HCT116 (cell line): ENCODE measurements at regions of chr20 and their contacts with region 1.

Region 1: DNA sequence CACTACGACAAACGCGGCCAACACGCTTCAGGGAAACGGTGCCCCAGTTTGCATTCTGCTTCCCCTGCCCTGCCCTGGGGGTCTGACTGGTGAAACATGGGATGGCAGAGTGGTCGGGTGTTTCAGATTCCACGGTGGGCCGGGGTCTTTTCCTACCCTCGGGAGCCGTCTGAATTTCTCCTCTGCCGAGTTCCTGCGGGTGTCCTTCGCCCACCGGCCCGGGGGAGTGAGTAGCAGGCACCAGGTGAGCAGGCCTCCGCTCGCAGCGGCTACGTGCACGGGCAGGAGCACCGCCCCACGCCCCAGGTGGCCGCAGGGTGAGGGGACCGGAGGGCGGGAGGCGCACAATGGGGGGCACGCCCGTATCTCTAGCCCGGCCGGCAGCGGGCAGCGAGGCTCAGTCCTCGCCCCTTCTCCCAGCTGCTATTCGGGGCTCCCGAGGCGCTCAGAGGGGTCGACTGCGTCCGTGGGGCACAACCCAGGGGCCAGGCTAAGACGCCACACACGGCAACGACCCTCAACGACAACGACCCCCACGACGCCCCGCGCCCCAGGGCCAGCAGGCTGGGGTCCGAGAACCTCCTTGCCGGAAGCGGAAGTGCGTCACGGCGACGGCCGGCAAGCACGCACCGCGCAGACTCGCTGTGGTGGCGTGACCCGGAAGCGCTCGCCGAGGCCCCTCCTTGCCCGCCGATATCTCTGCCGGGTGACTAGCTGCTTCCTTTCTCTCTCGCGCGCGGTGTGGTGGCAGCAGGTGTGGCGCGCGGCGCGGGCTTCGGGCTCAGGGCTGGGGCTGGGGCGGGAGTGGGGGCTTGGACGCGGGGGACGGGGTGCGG is at the start of gene RPS21:
- DNase-seq: peak; percentile 79
- ATAC-seq: peak; percentile 74
- H3K4me3 ChIP-seq: peak within 1 kb of the TSS; percentile 98 to 100
- H3K27ac ChIP-seq: peak within 1 kb of the TSS; percentile 95
- H3K4me1 ChIP-seq: peaks cover 8 to 37% of the 10 kb centered on the region in 2 experiments; a peak in 3 of 4 replicates
- H3K27me3 ChIP-seq: no peaks in the 10 kb centered on the region
- CTCF ChIP-seq: no peak
- POLR2A ChIP-seq: peak; percentile 80
- RAD21 ChIP-seq: no peak
- total RNA-seq, gene RPS21: 2,488 TPM

Region 2: DNA sequence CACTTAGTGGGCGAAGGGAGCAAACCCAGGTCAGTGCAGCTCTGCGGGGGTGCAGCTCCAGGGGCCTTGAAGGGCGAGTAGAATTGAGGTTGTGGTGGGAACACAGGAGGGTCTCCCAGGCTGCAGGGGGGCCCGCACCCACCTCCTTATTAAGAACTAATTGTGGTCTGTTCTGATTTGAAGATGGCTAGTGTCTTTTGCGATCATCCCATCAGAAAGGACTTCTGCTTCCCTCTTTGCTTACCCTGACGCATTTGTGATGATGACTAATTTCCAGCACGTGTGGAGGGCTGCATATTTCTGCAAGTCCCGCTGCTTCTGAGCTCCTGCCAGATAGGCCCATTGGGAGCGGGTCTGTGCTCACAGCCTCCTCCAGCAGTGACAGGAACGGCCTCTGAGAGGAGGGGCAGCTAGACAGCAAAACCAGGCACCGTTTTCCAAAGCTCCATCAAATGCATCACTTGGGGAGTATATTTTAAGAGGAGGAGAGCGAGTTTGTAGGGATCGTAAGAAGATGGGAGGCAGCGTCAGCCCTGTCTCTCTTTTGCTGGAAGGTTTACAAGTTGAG is 865.6 kb before region 1 on chr20:
- CTCF ChIA-PET with region 1: no interaction called
- POLR2A ChIA-PET with region 1: no interaction called
- RAD21 ChIA-PET with region 1: no interaction called
- intact Hi-C with region 1: no loop called
- DNase-seq: no peak
- ATAC-seq: no peak
- H3K4me3 ChIP-seq: no peak overlapping the region
- H3K27ac ChIP-seq: no peak overlapping the region
- H3K4me1 ChIP-seq: no peaks in the 10 kb centered on the region
- H3K27me3 ChIP-seq: no peaks in the 10 kb centered on the region
- CTCF ChIP-seq: no peak
- POLR2A ChIP-seq: no peak
- RAD21 ChIP-seq: no peak

Region 3: DNA sequence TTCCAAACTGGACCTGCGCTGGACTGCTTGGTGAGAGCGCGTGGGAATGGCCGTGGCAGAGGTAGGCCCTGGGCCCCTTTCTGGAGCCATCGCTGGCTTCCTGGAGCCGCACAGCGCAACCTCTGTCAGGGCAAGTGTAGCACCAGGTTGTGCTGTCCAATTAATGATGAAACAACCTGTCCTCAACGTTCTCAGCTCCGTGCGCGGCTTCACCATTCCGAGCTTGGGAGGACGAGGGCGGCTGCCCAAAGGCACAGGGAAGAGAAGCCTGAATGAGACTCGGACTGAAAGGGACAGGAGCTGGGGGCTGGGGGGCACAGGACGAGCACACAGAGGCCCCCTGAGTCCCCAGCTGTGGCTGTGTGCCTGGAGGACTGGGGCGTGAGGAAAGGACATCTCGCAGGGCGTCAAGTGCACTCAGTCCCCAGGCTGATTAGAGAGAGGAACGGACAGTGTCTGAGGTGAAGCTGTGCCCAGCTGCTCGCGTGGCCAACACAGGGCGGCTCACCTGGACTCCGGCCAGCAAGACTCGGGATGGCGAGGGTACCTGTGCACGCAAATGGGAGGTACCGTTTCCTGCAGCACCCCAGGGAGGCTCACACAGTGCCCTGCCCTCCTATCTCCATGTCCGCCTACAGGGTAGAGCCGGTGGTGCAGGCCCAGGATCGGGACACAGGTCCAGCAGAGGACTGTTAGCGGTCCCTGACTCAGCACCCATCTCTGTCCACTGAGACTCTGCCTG is 724.2 kb before region 1 on chr20:
- CTCF ChIA-PET with region 1: no interaction called
- POLR2A ChIA-PET with region 1: no interaction called
- RAD21 ChIA-PET with region 1: no interaction called
- intact Hi-C with region 1: no loop called
- DNase-seq: no peak
- ATAC-seq: peak; percentile 87
- H3K4me3 ChIP-seq: no peak overlapping the region
- H3K27ac ChIP-seq: no peak overlapping the region
- H3K4me1 ChIP-seq: no peaks in the 10 kb centered on the region
- H3K27me3 ChIP-seq: peaks cover 15% of the 10 kb centered on the region; the same call in 1 of the 2 replicates
- CTCF ChIP-seq: peak in 2 of 3 experiments; percentile 38 to 39; a peak in 3 of 6 replicates
- POLR2A ChIP-seq: no peak
- RAD21 ChIP-seq: no peak

Region 4: GRCh38 chr20:62010551-62011402 is 375.8 kb before region 1 on chr20:
- CTCF ChIA-PET with region 1: interaction called, 4 read pairs
- POLR2A ChIA-PET with region 1: no interaction called
- RAD21 ChIA-PET with region 1: no interaction called
- intact Hi-C with region 1: loop called (anchors 5 kb)
- DNase-seq: peak; percentile 10
- ATAC-seq: peak; percentile 82
- H3K4me3 ChIP-seq: no peak overlapping the region
- H3K27ac ChIP-seq: no peak overlapping the region
- H3K4me1 ChIP-seq: no peaks in the 10 kb centered on the region
- H3K27me3 ChIP-seq: no peaks in the 10 kb centered on the region
- CTCF ChIP-seq: peak; percentile 57 to 81 (median 74); a peak in 5 of 6 replicates
- POLR2A ChIP-seq: no peak
- RAD21 ChIP-seq: peak; percentile 88

Region 5: GRCh38 chr20:62302341-62303058 is 84.1 kb before region 1 on chr20 and contains the start of gene ADRM1:
- CTCF ChIA-PET with region 1: interaction called, 25 read pairs
- POLR2A ChIA-PET with region 1: interaction called, 4 read pairs
- RAD21 ChIA-PET with region 1: interaction called in 1 of 2 experiments, 8 read pairs
- intact Hi-C with region 1: loop called (anchors 1 kb)
- DNase-seq: peak; percentile 88
- ATAC-seq: peak; percentile 78
- H3K4me3 ChIP-seq: peak within 1 kb of the TSS; percentile 95 to 99
- H3K27ac ChIP-seq: peak within 1 kb of the TSS; percentile 95
- H3K4me1 ChIP-seq: peaks cover 17 to 40% of the 10 kb centered on the region in 2 experiments
- H3K27me3 ChIP-seq: no peaks in the 10 kb centered on the region
- CTCF ChIP-seq: peak; percentile 77 to 95 (median 93)
- POLR2A ChIP-seq: peak; percentile 23
- RAD21 ChIP-seq: peak; percentile 66
- total RNA-seq, gene ADRM1: 158 TPM

Region 6: DNA sequence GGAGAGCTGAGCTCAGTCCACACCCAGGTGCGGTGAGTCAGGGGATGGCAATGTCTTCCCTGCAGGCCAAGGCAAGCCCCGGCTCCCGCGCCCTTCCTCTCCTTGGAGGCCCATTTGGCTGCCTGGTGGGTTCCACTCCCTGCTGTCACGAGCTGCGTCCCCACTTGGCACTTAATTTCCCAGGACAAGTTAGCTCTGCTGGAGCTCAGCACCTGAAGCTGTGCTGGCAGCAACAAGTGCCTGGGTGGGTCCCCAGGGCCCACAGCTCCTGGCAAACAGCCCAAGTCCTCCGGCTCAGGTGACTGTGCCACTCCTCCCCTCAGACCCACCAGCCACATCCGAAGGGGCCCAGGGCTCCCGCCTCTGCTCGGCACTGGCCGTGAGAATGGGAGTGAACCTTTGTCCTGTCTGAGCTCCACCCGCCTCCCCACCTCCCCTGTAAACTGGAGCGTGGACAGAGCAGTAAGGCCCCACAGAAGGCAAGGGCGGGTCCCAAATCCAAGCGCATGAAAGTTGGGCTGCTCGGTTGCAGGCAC is 36.4 kb before region 1 on chr20:
- CTCF ChIA-PET with region 1: interaction called, 13 read pairs
- POLR2A ChIA-PET with region 1: no interaction called
- RAD21 ChIA-PET with region 1: interaction called in 1 of 2 experiments, 4 read pairs
- intact Hi-C with region 1: no loop called
- DNase-seq: peak; percentile 87
- ATAC-seq: peak; percentile 87
- H3K4me3 ChIP-seq: peak overlapping the region; percentile 19 to 52
- H3K27ac ChIP-seq: peak overlapping the region; percentile 99
- H3K4me1 ChIP-seq: peaks cover 26 to 48% of the 10 kb centered on the region in 2 experiments
- H3K27me3 ChIP-seq: no peaks in the 10 kb centered on the region
- CTCF ChIP-seq: no peak
- POLR2A ChIP-seq: no peak
- RAD21 ChIP-seq: no peak

Region 7: DNA sequence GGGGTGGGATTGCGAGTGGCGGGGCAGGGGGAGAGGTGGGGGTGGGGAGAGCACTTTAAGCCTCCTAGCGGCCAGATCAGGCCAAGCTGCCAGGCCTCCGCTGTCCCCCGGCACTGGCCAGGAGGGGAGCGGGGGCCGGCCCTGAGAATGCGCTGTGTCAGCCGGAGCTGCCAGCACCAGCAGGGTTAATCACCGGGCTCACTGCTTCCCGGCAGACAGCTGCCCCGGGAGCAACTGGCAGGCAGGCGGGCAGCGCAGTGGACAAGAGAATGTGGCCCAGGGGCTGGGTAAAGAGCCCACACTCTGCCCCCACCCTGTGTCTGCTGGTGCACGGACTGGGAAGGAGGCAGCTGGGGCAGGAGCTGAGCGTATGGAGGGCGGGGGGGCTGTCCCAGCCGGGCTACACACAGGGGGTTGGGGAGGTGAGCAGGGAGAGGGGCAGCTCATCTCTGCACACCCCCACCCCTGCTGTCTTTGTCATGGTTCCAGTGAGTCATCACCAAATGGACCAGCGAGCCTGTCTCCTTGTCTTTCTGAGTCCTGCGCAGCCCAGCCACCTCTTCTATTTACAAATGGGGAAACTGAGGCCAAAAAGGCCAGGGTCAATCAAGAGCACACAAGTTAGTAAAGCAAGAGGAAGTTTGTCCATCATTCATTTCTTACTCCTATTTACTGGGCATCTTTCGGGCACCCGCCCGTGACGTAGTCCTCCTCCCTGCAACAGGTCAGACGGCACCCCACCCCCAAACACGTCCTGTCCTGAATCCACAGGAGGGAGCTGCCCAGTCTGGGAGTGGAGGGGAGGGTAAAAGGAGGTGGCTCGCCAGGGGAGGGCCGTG is 17.4 kb before region 1 on chr20:
- CTCF ChIA-PET with region 1: interaction called, 10 read pairs
- POLR2A ChIA-PET with region 1: interaction called, 12 read pairs
- RAD21 ChIA-PET with region 1: no interaction called
- intact Hi-C with region 1: no loop called
- DNase-seq: no peak
- ATAC-seq: peak; percentile 36
- H3K4me3 ChIP-seq: peak overlapping the region; percentile 34 to 83
- H3K27ac ChIP-seq: peak overlapping the region; percentile 74; the same call in 1 of the 2 replicates
- H3K4me1 ChIP-seq: peaks cover 53 to 65% of the 10 kb centered on the region in 2 experiments
- H3K27me3 ChIP-seq: no peaks in the 10 kb centered on the region
- CTCF ChIP-seq: peak in 2 of 3 experiments; percentile 33 to 44; a peak in 3 of 6 replicates
- POLR2A ChIP-seq: no peak
- RAD21 ChIP-seq: no peak

Region 8: DNA sequence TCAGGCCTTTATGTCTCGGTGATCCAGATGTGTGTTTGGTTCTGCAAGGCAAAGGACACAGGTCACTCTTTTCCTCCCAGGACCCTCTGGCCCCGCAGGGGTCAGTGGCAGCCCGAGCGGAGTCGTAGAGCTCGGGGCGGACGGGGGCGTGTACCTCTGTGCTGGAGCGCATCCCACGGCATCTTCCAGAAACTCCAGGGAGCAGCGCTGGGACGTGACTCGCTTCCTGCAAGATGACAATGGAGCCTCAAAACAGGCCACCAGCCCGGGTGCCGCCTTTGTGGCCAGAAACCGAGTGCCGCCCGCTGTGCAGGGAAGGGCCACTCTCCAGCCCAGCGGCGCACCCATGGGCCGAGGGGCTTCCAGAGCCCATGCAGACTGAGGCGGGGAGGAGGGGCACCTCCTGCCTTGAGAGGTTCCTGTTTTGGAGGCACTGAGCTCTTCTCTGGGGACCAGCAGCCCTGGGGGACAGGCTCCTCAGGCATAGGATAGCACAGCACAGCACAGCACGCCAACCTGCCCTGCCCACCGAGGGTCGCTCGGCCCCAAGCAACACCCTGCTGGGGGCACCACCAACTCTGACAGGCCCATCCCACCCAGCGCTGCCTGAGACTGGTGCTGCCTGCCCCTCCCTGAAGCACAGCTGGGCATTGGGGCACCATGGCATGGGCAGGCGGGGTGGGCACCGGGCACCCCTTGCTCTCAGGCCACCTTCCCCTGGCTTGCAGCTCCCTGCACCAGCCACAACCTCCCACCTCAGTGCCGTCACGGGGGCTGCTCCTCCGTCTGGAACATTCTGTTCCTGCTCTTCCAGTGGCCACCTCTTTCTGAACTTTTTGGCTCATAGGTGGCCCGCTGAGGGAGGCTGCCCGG is 10.0 kb after region 1 on chr20:
- CTCF ChIA-PET with region 1: no interaction called
- POLR2A ChIA-PET with region 1: interaction called, 10 read pairs
- RAD21 ChIA-PET with region 1: no interaction called
- intact Hi-C with region 1: no loop called
- DNase-seq: no peak
- ATAC-seq: no peak
- H3K4me3 ChIP-seq: no peak overlapping the region
- H3K27ac ChIP-seq: no peak overlapping the region
- H3K4me1 ChIP-seq: no peaks in the 10 kb centered on the region
- H3K27me3 ChIP-seq: no peaks in the 10 kb centered on the region
- CTCF ChIP-seq: no peak
- POLR2A ChIP-seq: no peak
- RAD21 ChIP-seq: no peak

Region 9: DNA sequence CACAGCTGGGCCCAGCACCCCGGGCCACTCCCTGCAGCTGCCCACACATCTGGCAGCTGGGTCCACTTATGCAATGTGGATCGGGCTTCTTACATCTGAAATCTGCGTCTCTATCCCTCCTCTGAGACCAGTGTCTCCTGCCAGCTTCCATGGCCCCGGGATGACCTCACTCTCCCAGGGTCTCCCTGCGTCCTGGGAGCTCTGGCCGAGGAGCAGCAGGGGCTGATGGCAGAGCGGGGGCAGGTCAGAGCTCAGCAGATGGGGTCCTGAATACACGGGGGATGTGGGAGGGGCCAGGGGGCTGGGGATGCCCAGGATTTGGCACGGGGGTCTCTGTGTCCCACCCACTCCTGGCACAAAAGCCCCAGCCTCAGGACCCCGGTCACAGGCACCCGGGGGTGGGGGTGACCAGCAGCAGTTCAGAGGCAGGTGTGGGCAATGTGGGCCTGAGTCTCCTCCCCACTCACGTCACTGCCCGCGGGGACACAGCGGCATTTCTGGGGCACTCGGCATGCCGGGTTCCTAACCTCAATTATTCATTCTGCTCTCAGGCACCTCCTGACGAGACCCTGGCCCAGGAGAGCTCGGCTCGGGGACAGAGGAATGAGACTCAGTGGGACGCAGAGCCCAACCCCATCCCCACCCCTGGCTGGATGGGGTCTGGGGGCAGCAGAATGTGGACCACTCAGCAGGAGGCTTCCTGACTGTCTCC is 958.2 kb after region 1 on chr20:
- CTCF ChIA-PET with region 1: no interaction called
- POLR2A ChIA-PET with region 1: no interaction called
- RAD21 ChIA-PET with region 1: no interaction called
- intact Hi-C with region 1: no loop called
- DNase-seq: no peak
- ATAC-seq: no peak
- H3K4me3 ChIP-seq: no peak overlapping the region
- H3K27ac ChIP-seq: no peak overlapping the region
- H3K4me1 ChIP-seq: no peaks in the 10 kb centered on the region
- H3K27me3 ChIP-seq: peaks cover 8% of the 10 kb centered on the region; the same call in 1 of the 2 replicates
- CTCF ChIP-seq: no peak
- POLR2A ChIP-seq: no peak
- RAD21 ChIP-seq: no peak